ENCODE measurements at regions of chr11 and their contacts with region 1.

Region 1: GRCh38 chr11:62984246-62985017 is at the start of gene SLC22A6:
- DNase-seq: no peak
- H3K4me3 ChIP-seq: no peak within 1 kb of the TSS
- H3K27ac ChIP-seq: no peak within 1 kb of the TSS
- H3K4me1 ChIP-seq: no peaks in the 10 kb centered on the region
- H3K27me3 ChIP-seq: no peaks in the 10 kb centered on the region
- CTCF ChIP-seq: no peak
- POLR2A ChIP-seq: no peak
- total RNA-seq, gene SLC22A6: not detected

Region 2: GRCh38 chr11:61392981-61393595 is 1591.3 kb before region 1 on chr11:
- intact Hi-C with region 1: loop called (anchors 5 kb)
- DNase-seq: no peak
- H3K4me3 ChIP-seq: peak overlapping the region; percentile 67 to 70
- H3K27ac ChIP-seq: peak overlapping the region; percentile 80
- H3K4me1 ChIP-seq: peaks cover 17% of the 10 kb centered on the region
- H3K27me3 ChIP-seq: no peaks in the 10 kb centered on the region
- CTCF ChIP-seq: no peak
- POLR2A ChIP-seq: no peak

Region 3: GRCh38 chr11:62680825-62681240 is 303.6 kb before region 1 on chr11:
- intact Hi-C with region 1: no loop called
- DNase-seq: no peak
- H3K4me3 ChIP-seq: no peak overlapping the region
- H3K27ac ChIP-seq: no peak overlapping the region
- H3K4me1 ChIP-seq: peaks cover 28% of the 10 kb centered on the region
- H3K27me3 ChIP-seq: no peaks in the 10 kb centered on the region
- CTCF ChIP-seq: peak in 2 of 3 experiments; percentile 21 to 38
- POLR2A ChIP-seq: no peak

Region 4: GRCh38 chr11:62923601-62924411 is 60.6 kb before region 1 on chr11:
- intact Hi-C with region 1: no loop called
- DNase-seq: no peak
- H3K4me3 ChIP-seq: peak overlapping the region; percentile 18 to 25
- H3K27ac ChIP-seq: no peak overlapping the region
- H3K4me1 ChIP-seq: peaks cover 41% of the 10 kb centered on the region
- H3K27me3 ChIP-seq: peaks cover 12% of the 10 kb centered on the region
- CTCF ChIP-seq: no peak
- POLR2A ChIP-seq: no peak